Heart right ventricle (tissue), 16 donors: ENCODE measurements at regions of chr3 and their contacts with region 1.

Region 1: GRCh38 chr3:151168269-151169094 is 34.5 kb downstream of the GPR171 start:
- DNase-seq: peak; percentile 78 to 83
- ATAC-seq: peak; percentile 61 to 87 (median 76)
- H3K4me3 ChIP-seq: no peak overlapping the region
- H3K27ac ChIP-seq: peak overlapping the region in 2 of 10 donors; percentile 13 to 79
- H3K4me1 ChIP-seq: peaks cover 0 to 42% (median 3%) of the 10 kb centered on the region in 9 donors
- H3K27me3 ChIP-seq: no peaks in the 10 kb centered on the region
- CTCF ChIP-seq: peak; percentile 34 to 88 (median 79)

Region 2: DNA sequence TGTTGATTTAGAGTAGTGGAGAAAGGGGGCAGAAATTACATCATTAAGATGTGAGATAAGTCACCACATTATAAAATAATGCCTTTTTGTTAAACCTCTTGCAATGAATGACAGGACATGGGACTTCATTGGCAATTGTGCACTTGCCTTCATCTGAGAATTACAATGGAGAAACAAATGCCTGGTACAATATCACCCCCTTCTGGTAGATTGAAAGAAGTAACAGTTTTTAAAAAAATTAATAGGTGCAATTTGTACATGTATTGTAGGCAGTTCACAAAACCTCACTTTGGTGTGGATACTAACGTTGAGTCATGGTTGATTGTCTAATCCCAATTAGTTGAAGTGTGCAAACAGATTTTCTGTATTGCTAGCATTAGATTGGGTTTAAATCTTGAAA is 114.4 kb after region 1 on chr3:
- intact Hi-C with region 1: loop called (anchors 1 to 5 kb)
- DNase-seq: no peak
- ATAC-seq: peak in 6 of 8 donors; percentile 46 to 82 (median 58)
- H3K4me3 ChIP-seq: no peak overlapping the region
- H3K27ac ChIP-seq: peak overlapping the region in 5 of 10 donors; percentile 23 to 76 (median 63)
- H3K4me1 ChIP-seq: peaks cover 0 to 35% (median 9%) of the 10 kb centered on the region in 9 donors
- H3K27me3 ChIP-seq: no peaks in the 10 kb centered on the region
- CTCF ChIP-seq: peak; percentile 46 to 81 (median 70)

Region 3: GRCh38 chr3:151327571-151328198 is 159.2 kb after region 1 on chr3:
- intact Hi-C with region 1: loop called in 2 of 10 experiments (anchors 5 kb)
- DNase-seq: no peak
- ATAC-seq: peak in 2 of 8 donors; percentile 40 to 54
- H3K4me3 ChIP-seq: peak overlapping the region in 7 of 10 donors; percentile 2 to 52 (median 26)
- H3K27ac ChIP-seq: peak overlapping the region in 2 of 10 donors; percentile 38 to 81
- H3K4me1 ChIP-seq: peaks cover 0 to 53% (median 0%) of the 10 kb centered on the region in 9 donors
- H3K27me3 ChIP-seq: no peaks in the 10 kb centered on the region
- CTCF ChIP-seq: peak; percentile 33 to 76 (median 66)

Region 4: DNA sequence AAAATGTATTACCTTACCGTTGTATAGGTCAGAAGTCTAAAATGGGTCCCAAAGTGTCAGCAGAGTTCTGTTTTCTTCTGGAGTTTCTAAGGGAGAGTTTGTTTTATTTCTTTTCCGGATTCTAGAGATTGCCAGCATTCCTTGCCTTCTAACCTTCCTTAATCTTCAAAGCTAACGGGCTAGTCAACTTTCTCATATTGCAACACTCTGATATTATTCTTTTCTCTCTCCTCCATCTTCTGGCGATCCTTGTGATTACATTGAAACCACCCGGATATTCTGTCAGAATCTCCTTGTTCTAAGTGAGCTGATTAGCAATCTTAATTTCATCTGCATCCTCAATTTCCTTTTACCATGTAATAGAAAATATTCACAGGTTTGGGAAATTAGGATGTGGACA is 529.0 kb after region 1 on chr3:
- intact Hi-C with region 1: no loop called
- DNase-seq: no peak
- ATAC-seq: no peak
- H3K4me3 ChIP-seq: no peak overlapping the region
- H3K27ac ChIP-seq: no peak overlapping the region
- H3K4me1 ChIP-seq: no peaks in the 10 kb centered on the region
- H3K27me3 ChIP-seq: no peaks in the 10 kb centered on the region
- CTCF ChIP-seq: no peak